ENCODE measurements at regions of chr3 and their contacts with region 1.

Region 1: DNA sequence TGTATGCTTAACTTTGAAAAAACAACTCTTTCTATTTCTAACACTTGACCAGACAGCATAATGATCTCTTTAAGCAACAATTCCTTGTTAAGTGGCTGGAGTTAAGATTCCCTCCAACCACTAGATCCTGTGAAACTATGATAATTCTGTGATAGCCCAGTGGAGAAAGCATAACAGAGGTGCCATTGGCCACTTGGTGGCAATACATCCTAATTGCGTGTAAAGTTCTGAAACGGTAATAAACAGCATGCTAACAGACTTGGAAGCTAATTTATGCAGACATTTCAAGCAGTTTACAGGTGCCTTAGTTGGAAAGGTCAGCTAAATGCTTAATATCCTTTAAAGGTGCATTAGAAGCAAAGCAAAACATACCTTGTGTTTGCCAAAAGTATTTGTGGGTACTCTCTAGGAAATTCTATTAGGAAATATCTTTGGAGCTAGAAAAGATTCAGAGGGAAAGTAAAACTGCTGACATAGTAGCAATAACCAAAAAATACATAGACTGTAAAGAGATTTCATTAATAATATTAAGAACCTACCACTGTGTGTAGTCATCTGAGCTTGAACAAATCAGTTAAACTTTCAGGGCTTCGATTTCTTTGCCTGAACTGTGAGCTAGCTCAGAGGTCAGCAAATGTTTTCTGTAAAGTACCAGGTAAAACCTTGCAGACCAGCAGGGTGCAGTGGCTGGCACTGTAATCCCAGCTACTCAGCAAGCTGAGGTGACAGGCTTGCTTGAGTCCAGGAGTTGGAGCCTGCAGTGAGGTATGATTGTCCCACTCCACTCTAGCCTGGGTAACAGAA is 19.0 kb upstream of the CSTA start:
- DNase-seq: peak; percentile 19
- H3K4me3 ChIP-seq: no peak overlapping the region
- H3K27ac ChIP-seq: no peak overlapping the region
- H3K4me1 ChIP-seq: no peaks in the 10 kb centered on the region
- H3K27me3 ChIP-seq: no peaks in the 10 kb centered on the region
- CTCF ChIP-seq: peak; percentile 37; the same call in 1 of the 2 replicates

Region 2: DNA sequence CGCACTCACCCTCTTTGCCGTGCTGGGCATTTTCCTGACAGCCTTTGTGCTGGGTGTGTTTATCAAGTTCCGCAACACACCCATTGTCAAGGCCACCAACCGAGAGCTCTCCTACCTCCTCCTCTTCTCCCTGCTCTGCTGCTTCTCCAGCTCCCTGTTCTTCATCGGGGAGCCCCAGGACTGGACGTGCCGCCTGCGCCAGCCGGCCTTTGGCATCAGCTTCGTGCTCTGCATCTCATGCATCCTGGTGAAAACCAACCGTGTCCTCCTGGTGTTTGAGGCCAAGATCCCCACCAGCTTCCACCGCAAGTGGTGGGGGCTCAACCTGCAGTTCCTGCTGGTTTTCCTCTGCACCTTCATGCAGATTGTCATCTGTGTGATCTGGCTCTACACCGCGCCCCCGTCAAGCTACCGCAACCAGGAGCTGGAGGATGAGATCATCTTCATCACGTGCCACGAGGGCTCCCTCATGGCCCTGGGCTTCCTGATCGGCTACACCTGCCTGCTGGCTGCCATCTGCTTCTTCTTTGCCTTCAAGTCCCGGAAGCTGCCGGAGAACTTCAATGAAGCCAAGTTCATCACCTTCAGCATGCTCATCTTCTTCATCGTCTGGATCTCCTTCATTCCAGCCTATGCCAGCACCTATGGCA is 22.1 kb before region 1 on chr3:
- CTCF ChIA-PET with region 1: no interaction called
- POLR2A ChIA-PET with region 1: no interaction called
- intact Hi-C with region 1: no loop called
- DNase-seq: no peak
- H3K4me3 ChIP-seq: no peak overlapping the region
- H3K27ac ChIP-seq: no peak overlapping the region
- H3K4me1 ChIP-seq: no peaks in the 10 kb centered on the region
- H3K27me3 ChIP-seq: peaks cover 34% of the 10 kb centered on the region
- CTCF ChIP-seq: no peak

Region 3: DNA sequence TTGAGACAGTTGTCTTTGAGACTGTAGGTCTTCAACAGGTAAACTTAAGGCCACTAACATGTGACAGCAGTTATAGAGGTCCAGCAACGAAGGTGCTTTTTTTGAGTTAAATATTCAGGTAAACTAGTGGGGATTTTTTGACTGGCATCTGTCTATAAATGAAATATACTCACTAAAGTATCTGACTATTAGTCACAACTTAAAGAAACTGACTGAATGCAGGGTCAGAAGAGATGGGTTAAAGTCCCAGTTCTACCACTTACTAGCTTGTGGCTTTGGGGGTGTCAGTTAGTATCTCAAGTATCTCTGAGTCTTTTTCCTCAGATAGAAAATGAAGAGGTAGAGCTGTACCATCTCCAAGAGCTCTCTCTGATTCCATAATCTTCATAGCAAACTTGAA is 59.1 kb after region 1 on chr3:
- CTCF ChIA-PET with region 1: interaction called, 10 read pairs
- POLR2A ChIA-PET with region 1: no interaction called
- intact Hi-C with region 1: no loop called
- DNase-seq: no peak
- H3K4me3 ChIP-seq: no peak overlapping the region
- H3K27ac ChIP-seq: no peak overlapping the region
- H3K4me1 ChIP-seq: no peaks in the 10 kb centered on the region
- H3K27me3 ChIP-seq: no peaks in the 10 kb centered on the region
- CTCF ChIP-seq: no peak

Measured in A673 (cell line).